CD8-positive, alpha-beta memory T cell (primary cell): ENCODE measurements at regions of chr14 and their contacts with region 1.

Region 1: GRCh38 chr14:89589400-89590118 is 172.5 kb upstream of the FOXN3 start:
- DNase-seq: no peak
- H3K4me3 ChIP-seq: no peak overlapping the region
- H3K4me3 Mint-ChIP-seq: no peak overlapping the region
- H3K27ac ChIP-seq: no peak overlapping the region
- H3K27ac Mint-ChIP-seq: peak overlapping the region in 5 of 8 donors; percentile 25 to 79 (median 52)
- H3K4me1 ChIP-seq: peaks cover 19% of the 10 kb centered on the region
- H3K4me1 Mint-ChIP-seq: peaks cover 74 to 92% (median 76%) of the 10 kb centered on the region in 3 donors
- H3K27me3 ChIP-seq: no peaks in the 10 kb centered on the region
- H3K27me3 Mint-ChIP-seq: no peaks in the 10 kb centered on the region

Region 2: DNA sequence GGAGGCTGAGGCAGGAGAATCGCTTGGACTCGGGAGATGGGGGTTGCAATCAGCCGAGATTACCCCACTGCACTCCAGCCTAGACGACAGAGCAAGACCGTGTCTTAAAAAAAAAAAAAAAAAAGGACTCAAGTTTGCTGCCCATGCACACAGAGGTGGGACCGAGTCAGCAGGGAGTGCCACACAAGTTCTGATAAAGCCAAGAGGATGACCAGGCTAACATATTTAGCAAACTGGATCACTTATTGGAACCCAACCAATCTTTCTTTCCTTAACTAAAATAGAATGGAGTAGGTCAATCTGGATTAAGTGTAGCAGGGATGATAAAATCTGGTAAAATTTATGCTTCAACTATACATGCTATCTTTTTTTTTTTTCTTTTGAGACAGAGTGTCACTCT is 17.9 kb after region 1 on chr14:
- CTCF ChIA-PET with region 1: no interaction called
- POLR2A ChIA-PET with region 1: interaction called, 11 read pairs
- DNase-seq: no peak
- H3K4me3 ChIP-seq: no peak overlapping the region
- H3K4me3 Mint-ChIP-seq: no peak overlapping the region
- H3K27ac ChIP-seq: no peak overlapping the region
- H3K27ac Mint-ChIP-seq: peak overlapping the region in 1 of 8 donors; percentile 61
- H3K4me1 ChIP-seq: peaks cover 38% of the 10 kb centered on the region
- H3K4me1 Mint-ChIP-seq: peaks cover 65 to 88% (median 81%) of the 10 kb centered on the region in 3 donors
- H3K27me3 ChIP-seq: no peaks in the 10 kb centered on the region
- H3K27me3 Mint-ChIP-seq: no peaks in the 10 kb centered on the region